Activated T-helper 1 cell treated with anti-CD3 and anti-CD28 coated beads, Interleukin-12 subunit alpha, Interleukin-12 subunit beta, Interleukin-2, Interleukin-4 antibody, amounts not matched to agents 30 ng/mL and 10 ng/mL and 1 ng/mL, durations not matched to agents 14 hours and 24 hours and 36 hours (primary cell): ENCODE measurements at regions of chr6 and their contacts with region 1.

Region 1: GRCh38 chr6:138517635-138518034 is 18.3 kb upstream of the NHSL1 start:
- DNase-seq: peak; percentile 51
- H3K4me3 Mint-ChIP-seq: no peak overlapping the region
- H3K27ac Mint-ChIP-seq: no peak overlapping the region
- H3K4me1 Mint-ChIP-seq: peaks cover 10% of the 10 kb centered on the region
- H3K27me3 Mint-ChIP-seq: peaks cover 8% of the 10 kb centered on the region

Region 2: DNA sequence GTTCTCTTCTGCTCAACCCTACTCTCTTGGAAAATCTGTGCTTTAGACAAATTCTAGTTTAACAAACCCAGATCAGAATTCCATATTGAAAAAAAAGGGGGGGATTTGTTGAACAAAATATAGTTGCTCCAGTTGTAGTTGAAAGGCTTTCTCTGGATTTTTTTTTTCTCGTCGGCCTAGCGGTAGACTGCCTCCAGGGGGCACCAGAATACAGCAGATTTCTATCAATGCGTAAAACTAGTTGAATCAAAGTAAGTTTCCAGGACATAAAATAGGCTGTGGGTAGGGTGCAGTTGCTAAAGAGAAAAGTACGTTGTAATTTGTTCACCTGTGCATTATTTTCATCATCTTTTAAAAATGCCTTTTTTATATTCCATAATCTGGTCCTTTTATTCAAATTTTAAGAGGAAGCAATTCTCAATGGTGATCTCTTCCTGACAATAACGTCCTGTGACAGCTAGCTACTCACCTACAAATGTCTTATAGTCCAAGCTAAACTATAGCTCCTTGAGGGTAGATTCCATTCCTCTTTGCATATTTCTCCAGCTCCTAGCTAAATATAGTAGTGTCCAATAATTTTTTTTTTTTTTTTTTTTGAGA is 515.8 kb before region 1 on chr6:
- intact Hi-C with region 1: loop called (anchors 5 kb)
- DNase-seq: peak; percentile 38
- H3K4me3 Mint-ChIP-seq: no peak overlapping the region
- H3K27ac Mint-ChIP-seq: no peak overlapping the region
- H3K4me1 Mint-ChIP-seq: peaks cover 27% of the 10 kb centered on the region
- H3K27me3 Mint-ChIP-seq: peaks cover 6% of the 10 kb centered on the region

Region 3: GRCh38 chr6:138428944-138429598 is 88.6 kb before region 1 on chr6:
- intact Hi-C with region 1: loop called (anchors 1 kb)
- DNase-seq: no peak
- H3K4me3 Mint-ChIP-seq: no peak overlapping the region
- H3K27ac Mint-ChIP-seq: no peak overlapping the region
- H3K4me1 Mint-ChIP-seq: peaks cover 5% of the 10 kb centered on the region
- H3K27me3 Mint-ChIP-seq: peaks cover 1% of the 10 kb centered on the region

Region 4: DNA sequence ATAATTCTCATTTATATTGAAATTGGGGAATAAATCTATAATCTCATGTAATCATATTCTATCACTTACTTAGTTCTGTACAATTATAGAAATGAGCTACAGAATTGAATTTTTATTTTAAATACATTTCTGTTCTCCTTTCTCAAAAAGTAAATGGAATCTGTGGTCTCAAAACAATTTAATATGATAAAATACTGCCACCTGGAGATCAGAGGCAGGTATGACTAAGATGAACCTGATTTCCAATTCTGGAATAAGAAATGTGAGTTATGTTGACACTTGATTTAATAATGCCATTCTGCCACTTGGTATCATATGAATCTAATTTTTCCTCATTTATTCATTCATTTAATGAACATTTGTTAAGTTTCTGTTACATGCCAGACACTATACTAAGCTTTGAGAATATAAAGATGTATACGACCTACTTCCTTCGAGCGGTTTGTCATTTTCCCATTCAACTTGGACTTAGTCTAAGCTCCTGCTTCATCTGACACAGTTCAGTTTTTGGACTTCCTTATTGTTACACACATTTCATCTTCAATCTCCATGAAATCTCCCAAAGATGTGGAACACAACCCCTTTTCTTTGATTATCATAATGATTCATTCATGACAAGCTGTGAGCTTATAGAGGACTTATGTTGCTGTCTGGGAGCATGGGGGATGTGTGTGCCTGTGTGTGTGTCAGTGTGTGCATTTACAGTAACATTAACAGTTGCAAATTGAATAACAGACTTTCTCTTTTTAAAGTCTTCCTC is 248.4 kb after region 1 on chr6:
- intact Hi-C with region 1: loop called (anchors 2 kb)
- DNase-seq: no peak
- H3K4me3 Mint-ChIP-seq: no peak overlapping the region
- H3K27ac Mint-ChIP-seq: no peak overlapping the region
- H3K4me1 Mint-ChIP-seq: peaks cover 9% of the 10 kb centered on the region
- H3K27me3 Mint-ChIP-seq: no peaks in the 10 kb centered on the region